ENCODE measurements at regions of chr1 and their contacts with region 1.

Region 1: GRCh38 chr1:204941421-204942338 is 71.0 kb downstream of the NFASC start:
- DNase-seq: peak; percentile 61 to 76
- H3K4me3 ChIP-seq: no peak overlapping the region
- H3K4me3 Mint-ChIP-seq: no peak overlapping the region
- H3K27ac Mint-ChIP-seq: no peak overlapping the region
- H3K4me1 ChIP-seq: no peaks in the 10 kb centered on the region
- H3K4me1 Mint-ChIP-seq: no peaks in the 10 kb centered on the region
- H3K27me3 ChIP-seq: no peaks in the 10 kb centered on the region; the same call in 1 of the 2 replicates
- H3K27me3 Mint-ChIP-seq: peaks cover 4% of the 10 kb centered on the region
- CTCF ChIP-seq: peak; percentile 94 to 96

Region 2: DNA sequence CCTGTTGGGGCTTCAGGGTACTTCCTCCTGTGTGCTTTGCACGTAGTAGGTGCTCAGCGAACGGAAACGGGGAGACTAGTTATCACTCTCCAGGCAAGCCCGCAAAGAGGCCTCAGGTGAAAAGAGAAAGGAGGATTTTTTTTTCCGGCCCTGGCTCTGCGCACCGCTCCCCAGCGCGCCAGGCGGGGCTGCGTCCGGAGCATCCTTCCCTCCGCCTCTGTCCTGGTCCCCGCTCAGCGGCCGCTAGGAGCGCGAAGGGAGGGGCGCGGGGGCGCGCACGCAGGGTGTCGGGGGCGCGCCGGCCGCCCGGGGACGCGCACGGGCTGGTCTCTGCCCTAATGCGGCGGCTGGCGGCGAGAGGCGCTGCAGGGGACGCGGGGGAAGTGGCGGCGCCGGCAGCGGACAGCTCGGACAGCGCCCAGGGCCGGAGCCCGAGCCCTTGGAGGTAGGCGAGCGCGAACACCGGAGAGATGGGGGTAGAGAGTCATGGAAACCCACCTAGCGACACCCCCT is 113.3 kb before region 1 on chr1:
- CTCF ChIA-PET with region 1: interaction called, 3 read pairs
- POLR2A ChIA-PET with region 1: no interaction called
- intact Hi-C with region 1: loop called (anchors 1 kb)
- DNase-seq: peak; percentile 52 to 77
- H3K4me3 ChIP-seq: peak overlapping the region; percentile 25
- H3K4me3 Mint-ChIP-seq: no peak overlapping the region
- H3K27ac Mint-ChIP-seq: no peak overlapping the region
- H3K4me1 ChIP-seq: no peaks in the 10 kb centered on the region
- H3K4me1 Mint-ChIP-seq: no peaks in the 10 kb centered on the region
- H3K27me3 ChIP-seq: peaks cover 1% of the 10 kb centered on the region; the same call in 1 of the 2 replicates
- H3K27me3 Mint-ChIP-seq: peaks cover 18% of the 10 kb centered on the region
- CTCF ChIP-seq: no peak

Region 3: GRCh38 chr1:204885790-204886189 is 55.9 kb before region 1 on chr1:
- CTCF ChIA-PET with region 1: interaction called, 3 read pairs
- POLR2A ChIA-PET with region 1: no interaction called
- intact Hi-C with region 1: loop called (anchors 2 kb)
- DNase-seq: no peak
- H3K4me3 ChIP-seq: no peak overlapping the region
- H3K4me3 Mint-ChIP-seq: no peak overlapping the region
- H3K27ac Mint-ChIP-seq: no peak overlapping the region
- H3K4me1 ChIP-seq: no peaks in the 10 kb centered on the region
- H3K4me1 Mint-ChIP-seq: no peaks in the 10 kb centered on the region
- H3K27me3 ChIP-seq: no peaks in the 10 kb centered on the region
- H3K27me3 Mint-ChIP-seq: peaks cover 2% of the 10 kb centered on the region
- CTCF ChIP-seq: no peak

Region 4: GRCh38 chr1:204924013-204924967 is 17.4 kb before region 1 on chr1:
- CTCF ChIA-PET with region 1: interaction called, 9 read pairs
- POLR2A ChIA-PET with region 1: no interaction called
- intact Hi-C with region 1: loop called (anchors 1 kb)
- DNase-seq: peak; percentile 68 to 73
- H3K4me3 ChIP-seq: no peak overlapping the region
- H3K4me3 Mint-ChIP-seq: peak overlapping the region; percentile 57
- H3K27ac Mint-ChIP-seq: peak overlapping the region; percentile 89
- H3K4me1 ChIP-seq: peaks cover 61% of the 10 kb centered on the region
- H3K4me1 Mint-ChIP-seq: peaks cover 54% of the 10 kb centered on the region
- H3K27me3 ChIP-seq: no peaks in the 10 kb centered on the region
- H3K27me3 Mint-ChIP-seq: no peaks in the 10 kb centered on the region
- CTCF ChIP-seq: no peak

Region 5: GRCh38 chr1:205162301-205162700 is 220.6 kb after region 1 on chr1:
- CTCF ChIA-PET with region 1: no interaction called
- POLR2A ChIA-PET with region 1: no interaction called
- intact Hi-C with region 1: no loop called
- DNase-seq: no peak
- H3K4me3 ChIP-seq: no peak overlapping the region
- H3K4me3 Mint-ChIP-seq: no peak overlapping the region
- H3K27ac Mint-ChIP-seq: no peak overlapping the region
- H3K4me1 ChIP-seq: no peaks in the 10 kb centered on the region
- H3K4me1 Mint-ChIP-seq: no peaks in the 10 kb centered on the region
- H3K27me3 ChIP-seq: no peaks in the 10 kb centered on the region
- H3K27me3 Mint-ChIP-seq: no peaks in the 10 kb centered on the region
- CTCF ChIP-seq: no peak

Measured in Caco-2 (cell line).